ENCODE measurements at regions of chr4 and their contacts with region 1.

Region 1: GRCh38 chr4:147518846-147519767 is 38.2 kb downstream of the EDNRA start:
- H3K4me3 ChIP-seq: no peak overlapping the region
- H3K27ac ChIP-seq: no peak overlapping the region
- H3K4me1 ChIP-seq: no peaks in the 10 kb centered on the region
- CTCF ChIP-seq: peak; percentile 36; the same call in 1 of the 2 replicates

Region 2: GRCh38 chr4:147407261-147408045 is 111.7 kb before region 1 on chr4:
- CTCF ChIA-PET with region 1: no interaction called
- POLR2A ChIA-PET with region 1: no interaction called
- H3K4me3 ChIP-seq: no peak overlapping the region
- H3K27ac ChIP-seq: no peak overlapping the region
- H3K4me1 ChIP-seq: no peaks in the 10 kb centered on the region
- CTCF ChIP-seq: no peak

Region 3: DNA sequence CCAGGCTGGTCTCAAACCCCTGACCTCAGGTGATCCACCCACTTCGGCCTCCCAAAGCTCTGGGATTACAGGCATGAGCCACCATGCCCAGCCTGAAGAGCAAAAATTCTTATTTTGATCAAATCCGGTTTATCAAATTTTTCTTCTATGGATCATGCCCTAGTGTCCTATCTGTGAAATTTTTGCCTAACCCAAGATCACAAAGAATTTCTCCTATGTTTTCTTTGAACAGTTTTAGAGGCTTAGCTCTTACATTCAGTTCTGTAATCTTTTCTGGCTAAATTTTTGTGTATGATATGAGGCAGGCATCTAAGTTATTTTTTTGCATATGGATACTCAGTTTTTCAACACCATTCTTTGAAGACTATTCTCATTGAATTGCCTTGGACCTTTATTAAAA is 10.8 kb before region 1 on chr4:
- CTCF ChIA-PET with region 1: interaction called, 12 read pairs
- POLR2A ChIA-PET with region 1: no interaction called
- H3K4me3 ChIP-seq: no peak overlapping the region
- H3K27ac ChIP-seq: no peak overlapping the region
- H3K4me1 ChIP-seq: no peaks in the 10 kb centered on the region
- CTCF ChIP-seq: no peak

Region 4: DNA sequence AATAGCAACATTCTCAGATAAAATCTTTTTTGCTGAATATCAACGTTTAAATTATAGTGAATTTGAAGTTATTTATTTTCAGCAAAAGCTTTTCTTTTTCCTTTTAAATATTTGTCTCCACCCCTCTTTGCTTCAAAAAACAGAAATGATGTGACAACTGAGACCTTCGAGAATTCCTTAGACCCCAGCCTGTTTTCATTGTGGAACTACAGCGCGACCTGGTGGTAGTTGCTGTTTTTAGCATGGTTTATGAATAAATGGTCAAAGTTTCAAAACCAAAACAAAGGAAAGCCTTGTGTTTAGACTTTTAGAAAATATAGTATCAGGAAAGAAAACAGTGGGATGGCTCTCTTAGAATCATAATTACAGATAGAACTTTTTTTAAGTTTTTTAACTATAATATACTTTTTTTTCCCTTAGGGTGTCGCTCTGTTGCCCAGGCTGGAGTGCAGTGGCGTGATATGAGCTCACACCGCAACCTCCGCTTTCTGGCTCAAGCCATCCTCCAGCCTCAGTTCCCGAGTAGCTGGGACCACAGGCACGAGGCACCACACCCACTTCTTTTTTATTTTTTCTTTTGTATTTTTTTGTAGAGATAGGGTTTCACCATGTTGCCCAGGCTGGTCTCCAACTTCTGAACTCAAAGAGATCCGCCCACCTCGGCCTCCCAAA is 71.3 kb after region 1 on chr4:
- CTCF ChIA-PET with region 1: interaction called, 17 read pairs
- POLR2A ChIA-PET with region 1: no interaction called
- H3K4me3 ChIP-seq: no peak overlapping the region
- H3K27ac ChIP-seq: no peak overlapping the region
- H3K4me1 ChIP-seq: no peaks in the 10 kb centered on the region
- CTCF ChIP-seq: 0 out of 2 replicates have a peak, but pooled peaks have one; percentile 42

Measured in HEK293 (cell line).